SK-N-SH (cell line): ENCODE measurements at regions of chr11 and their contacts with region 1.

Region 1: GRCh38 chr11:6362873-6363678 is 27.2 kb upstream of the SMPD1 start:
- DNase-seq: peak; percentile 74
- H3K4me3 ChIP-seq: no peak overlapping the region; a peak in 1 of 4 replicates
- H3K27ac ChIP-seq: no peak overlapping the region
- H3K4me1 ChIP-seq: no peaks in the 10 kb centered on the region
- H3K27me3 ChIP-seq: no peaks in the 10 kb centered on the region; the same call in 1 of the 2 replicates
- CTCF ChIP-seq: peak; percentile 89
- EP300 ChIP-seq: no peak
- RAD21 ChIP-seq: peak; percentile 77

Region 2: GRCh38 chr11:5938603-5938965 is 424.5 kb before region 1 on chr11:
- CTCF ChIA-PET with region 1: no interaction called
- POLR2A ChIA-PET with region 1: no interaction called
- DNase-seq: no peak
- H3K4me3 ChIP-seq: no peak overlapping the region
- H3K27ac ChIP-seq: no peak overlapping the region
- H3K4me1 ChIP-seq: no peaks in the 10 kb centered on the region
- H3K27me3 ChIP-seq: peaks cover 7% of the 10 kb centered on the region; the same call in 1 of the 2 replicates
- CTCF ChIP-seq: no peak
- EP300 ChIP-seq: no peak
- RAD21 ChIP-seq: no peak

Region 3: GRCh38 chr11:6022956-6023355 is 340.1 kb before region 1 on chr11:
- CTCF ChIA-PET with region 1: interaction called, 15 read pairs
- POLR2A ChIA-PET with region 1: no interaction called
- DNase-seq: no peak
- H3K4me3 ChIP-seq: no peak overlapping the region
- H3K27ac ChIP-seq: no peak overlapping the region
- H3K4me1 ChIP-seq: no peaks in the 10 kb centered on the region
- H3K27me3 ChIP-seq: no peaks in the 10 kb centered on the region
- CTCF ChIP-seq: peak; percentile 56
- EP300 ChIP-seq: no peak
- RAD21 ChIP-seq: peak; percentile 68

Region 4: GRCh38 chr11:6251120-6251733 is 111.8 kb before region 1 on chr11:
- CTCF ChIA-PET with region 1: interaction called, 50 read pairs
- POLR2A ChIA-PET with region 1: no interaction called
- DNase-seq: peak; percentile 79
- H3K4me3 ChIP-seq: no peak overlapping the region; a peak in 1 of 4 replicates
- H3K27ac ChIP-seq: no peak overlapping the region
- H3K4me1 ChIP-seq: no peaks in the 10 kb centered on the region; a peak in 1 of 4 replicates
- H3K27me3 ChIP-seq: peaks cover 8% of the 10 kb centered on the region; the same call in 1 of the 2 replicates
- CTCF ChIP-seq: peak; percentile 73
- EP300 ChIP-seq: no peak
- RAD21 ChIP-seq: peak; percentile 62

Region 5: GRCh38 chr11:6307876-6308275 is 55.2 kb before region 1 on chr11:
- CTCF ChIA-PET with region 1: interaction called, 18 read pairs
- POLR2A ChIA-PET with region 1: no interaction called
- DNase-seq: no peak
- H3K4me3 ChIP-seq: no peak overlapping the region
- H3K27ac ChIP-seq: no peak overlapping the region
- H3K4me1 ChIP-seq: no peaks in the 10 kb centered on the region
- H3K27me3 ChIP-seq: peaks cover 4% of the 10 kb centered on the region; the same call in 1 of the 2 replicates
- CTCF ChIP-seq: no peak
- EP300 ChIP-seq: no peak
- RAD21 ChIP-seq: no peak

Region 6: GRCh38 chr11:6333112-6333511 is 30.0 kb before region 1 on chr11:
- CTCF ChIA-PET with region 1: interaction called, 10 read pairs
- POLR2A ChIA-PET with region 1: no interaction called
- DNase-seq: peak; percentile 26
- H3K4me3 ChIP-seq: no peak overlapping the region
- H3K27ac ChIP-seq: no peak overlapping the region
- H3K4me1 ChIP-seq: peaks cover 0 to 2% of the 10 kb centered on the region in 2 experiments; a peak in 2 of 4 replicates
- H3K27me3 ChIP-seq: peaks cover 15% of the 10 kb centered on the region; the same call in 1 of the 2 replicates
- CTCF ChIP-seq: no peak
- EP300 ChIP-seq: peak in 1 of 2 experiments; percentile 23; a peak in 1 of 4 replicates
- RAD21 ChIP-seq: no peak

Region 7: DNA sequence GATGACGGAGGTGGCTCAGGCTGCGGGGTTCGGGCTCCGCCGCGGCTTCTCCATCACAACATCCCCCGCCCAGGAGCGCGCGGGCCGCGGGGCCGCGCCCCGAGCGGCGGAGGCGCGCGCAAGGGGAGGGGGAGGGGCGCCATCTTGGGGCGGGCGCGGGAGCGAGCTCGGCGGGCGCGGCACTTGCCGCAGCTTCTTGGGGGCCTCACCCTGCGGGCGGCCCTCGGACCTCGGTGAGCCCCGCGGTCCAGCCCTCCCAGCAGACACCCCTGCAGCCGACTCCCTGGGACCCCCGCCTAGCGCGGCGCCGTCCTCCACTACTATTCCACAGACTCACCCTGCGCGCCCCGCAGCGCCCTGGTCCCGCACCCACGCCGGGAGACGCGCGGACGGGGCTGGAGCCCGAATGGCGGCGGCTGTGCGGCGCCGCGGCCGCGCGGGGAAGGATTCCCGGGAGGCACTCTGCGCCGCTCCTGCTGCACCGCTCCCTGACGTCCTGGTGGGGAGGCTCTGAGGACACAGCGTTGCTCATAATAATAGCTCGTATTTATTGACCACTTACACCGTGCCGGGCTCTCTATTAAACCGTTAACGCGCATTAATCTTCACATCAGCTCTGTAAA is 56.0 kb after region 1 on chr11 and contains the start of gene APBB1:
- CTCF ChIA-PET with region 1: interaction called, 10 read pairs
- POLR2A ChIA-PET with region 1: no interaction called
- DNase-seq: peak; percentile 96
- H3K4me3 ChIP-seq: peak within 1 kb of the TSS; percentile 74 to 77
- H3K27ac ChIP-seq: peak within 1 kb of the TSS in 1 of 2 experiments; percentile 80; a peak in 2 of 4 replicates
- H3K4me1 ChIP-seq: peaks cover 0 to 11% of the 10 kb centered on the region in 2 experiments; a peak in 1 of 4 replicates
- H3K27me3 ChIP-seq: no peaks in the 10 kb centered on the region
- CTCF ChIP-seq: peak; percentile 19; the same call in 1 of the 2 replicates
- EP300 ChIP-seq: no peak
- RAD21 ChIP-seq: peak; percentile 6; the same call in 1 of the 2 replicates
- polyA plus RNA-seq, gene APBB1: 32.9 and 35.9 TPM in 2 replicates

Region 8: DNA sequence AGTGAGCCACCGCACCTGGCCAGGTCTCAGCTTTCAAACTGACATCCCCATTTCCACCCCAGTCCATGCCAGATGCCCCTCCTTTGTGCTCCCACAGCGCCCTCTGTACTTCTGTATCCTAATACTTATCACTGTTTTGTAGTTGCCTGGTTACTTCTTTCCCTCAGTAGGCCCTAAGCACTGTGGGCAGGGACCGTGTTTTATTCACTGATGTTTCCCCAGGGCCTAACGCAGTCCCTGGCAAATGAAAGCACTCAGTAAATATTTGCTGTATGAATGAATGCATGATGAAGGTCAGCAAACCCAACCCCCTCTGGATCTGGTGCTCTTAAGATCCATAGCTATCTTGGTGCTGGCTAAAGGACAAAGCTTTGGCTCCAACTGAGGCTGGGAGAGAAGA is 112.9 kb after region 1 on chr11:
- CTCF ChIA-PET with region 1: no interaction called
- POLR2A ChIA-PET with region 1: no interaction called
- DNase-seq: no peak
- H3K4me3 ChIP-seq: no peak overlapping the region
- H3K27ac ChIP-seq: no peak overlapping the region
- H3K4me1 ChIP-seq: peaks cover 12 to 25% of the 10 kb centered on the region in 2 experiments; a peak in 1 of 4 replicates
- H3K27me3 ChIP-seq: no peaks in the 10 kb centered on the region
- CTCF ChIP-seq: no peak
- EP300 ChIP-seq: no peak
- RAD21 ChIP-seq: no peak